ENCODE measurements at regions of chr15 and their contacts with region 1.

Region 1: DNA sequence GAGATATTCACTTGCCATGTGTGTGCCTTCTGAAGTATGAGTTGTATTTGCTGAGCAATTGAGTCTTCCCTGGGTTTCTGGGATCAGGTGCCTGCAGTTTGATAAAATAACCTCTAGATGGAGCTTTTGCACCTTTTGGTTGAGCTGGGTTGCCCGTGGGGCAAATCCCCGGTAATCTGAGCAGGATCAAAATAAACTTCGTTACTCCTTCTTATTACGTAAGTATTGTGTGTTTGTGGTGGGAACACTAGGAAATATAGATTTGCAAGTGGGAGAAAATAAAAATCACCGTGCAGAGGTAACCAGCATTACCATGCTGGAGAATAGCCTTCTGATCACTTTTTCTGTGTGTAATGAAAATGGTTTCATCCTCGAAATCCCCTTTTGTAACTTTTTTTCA is 277.4 kb upstream of the NR2E3 start:
- DNase-seq: no peak
- ATAC-seq: peak in 1 of 8 donors; percentile 32
- H3K4me3 ChIP-seq: no peak overlapping the region
- H3K27ac ChIP-seq: no peak overlapping the region
- H3K4me1 ChIP-seq: peaks cover 0 to 17% (median 5%) of the 10 kb centered on the region in 9 donors
- H3K27me3 ChIP-seq: no peaks in the 10 kb centered on the region
- CTCF ChIP-seq: peak in 8 of 9 donors; percentile 29 to 54 (median 49)

Region 2: GRCh38 chr15:71469413-71469812 is 63.6 kb before region 1 on chr15:
- intact Hi-C with region 1: loop called in 1 of 10 experiments (anchors 10 kb)
- DNase-seq: no peak
- ATAC-seq: no peak
- H3K4me3 ChIP-seq: no peak overlapping the region
- H3K27ac ChIP-seq: no peak overlapping the region
- H3K4me1 ChIP-seq: peaks cover 0 to 33% (median 10%) of the 10 kb centered on the region in 9 donors
- H3K27me3 ChIP-seq: no peaks in the 10 kb centered on the region
- CTCF ChIP-seq: no peak

Measured in heart right ventricle (tissue), 16 donors.